ENCODE measurements at regions of chr2 and their contacts with region 1.

Region 1: GRCh38 chr2:179422037-179422643 is 157.5 kb upstream of the SESTD1 start:
- DNase-seq: peak; percentile 68
- H3K4me3 ChIP-seq: no peak overlapping the region
- H3K27ac ChIP-seq: no peak overlapping the region
- H3K4me1 ChIP-seq: no peaks in the 10 kb centered on the region
- H3K27me3 ChIP-seq: peaks cover 2 to 5% of the 10 kb centered on the region in 2 experiments
- CTCF ChIP-seq: peak; percentile 74 to 79
- POLR2A ChIP-seq: no peak

Region 2: DNA sequence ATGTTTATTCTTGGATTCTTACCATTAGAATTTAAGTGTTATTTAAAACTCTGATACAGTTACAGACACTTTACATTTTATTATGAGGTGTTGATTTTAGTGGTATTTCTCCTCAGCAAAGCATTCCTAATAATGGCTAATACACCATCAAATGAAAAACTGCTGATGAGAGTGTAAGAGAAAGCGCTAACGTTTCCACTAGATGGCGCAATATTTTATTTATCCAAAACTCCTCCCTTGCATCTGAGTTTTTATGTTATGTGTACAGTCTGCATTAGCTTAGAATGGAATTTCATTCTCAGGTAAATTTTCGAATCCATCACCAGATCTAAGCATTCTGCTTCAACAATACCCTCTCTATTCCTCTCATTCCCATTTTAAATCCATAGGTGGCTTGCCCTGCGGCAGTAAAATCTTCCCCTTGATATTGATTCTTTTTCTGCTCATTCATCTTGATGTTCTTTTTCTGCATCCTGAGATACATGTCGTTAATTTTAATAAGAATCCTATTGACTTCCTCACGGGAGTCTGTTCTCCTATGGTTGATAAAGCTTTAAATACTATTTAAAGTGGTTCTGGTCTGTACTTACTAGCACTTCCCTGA is 1025.0 kb before region 1 on chr2:
- CTCF ChIA-PET with region 1: no interaction called
- POLR2A ChIA-PET with region 1: no interaction called
- dilution Hi-C with region 1: no loop called
- intact Hi-C with region 1: no loop called
- DNase-seq: peak; percentile 59
- H3K4me3 ChIP-seq: no peak overlapping the region
- H3K27ac ChIP-seq: no peak overlapping the region
- H3K4me1 ChIP-seq: no peaks in the 10 kb centered on the region
- H3K27me3 ChIP-seq: no peaks in the 10 kb centered on the region
- CTCF ChIP-seq: peak; percentile 43 to 51
- POLR2A ChIP-seq: no peak

Region 3: GRCh38 chr2:179440642-179441251 is 18.6 kb after region 1 on chr2:
- CTCF ChIA-PET with region 1: interaction called, 6 read pairs
- POLR2A ChIA-PET with region 1: no interaction called
- dilution Hi-C with region 1: no loop called
- intact Hi-C with region 1: loop called (anchors 2 kb)
- DNase-seq: no peak
- H3K4me3 ChIP-seq: no peak overlapping the region
- H3K27ac ChIP-seq: no peak overlapping the region
- H3K4me1 ChIP-seq: no peaks in the 10 kb centered on the region
- H3K27me3 ChIP-seq: peaks cover 0 to 2% of the 10 kb centered on the region in 2 experiments
- CTCF ChIP-seq: peak; percentile 51 to 57
- POLR2A ChIP-seq: no peak

Region 4: GRCh38 chr2:179461367-179461886 is 39.3 kb after region 1 on chr2:
- CTCF ChIA-PET with region 1: no interaction called
- POLR2A ChIA-PET with region 1: no interaction called
- dilution Hi-C with region 1: no loop called
- intact Hi-C with region 1: no loop called
- DNase-seq: no peak
- H3K4me3 ChIP-seq: no peak overlapping the region
- H3K27ac ChIP-seq: no peak overlapping the region
- H3K4me1 ChIP-seq: peaks cover 4% of the 10 kb centered on the region
- H3K27me3 ChIP-seq: no peaks in the 10 kb centered on the region
- CTCF ChIP-seq: no peak
- POLR2A ChIP-seq: no peak

Region 5: DNA sequence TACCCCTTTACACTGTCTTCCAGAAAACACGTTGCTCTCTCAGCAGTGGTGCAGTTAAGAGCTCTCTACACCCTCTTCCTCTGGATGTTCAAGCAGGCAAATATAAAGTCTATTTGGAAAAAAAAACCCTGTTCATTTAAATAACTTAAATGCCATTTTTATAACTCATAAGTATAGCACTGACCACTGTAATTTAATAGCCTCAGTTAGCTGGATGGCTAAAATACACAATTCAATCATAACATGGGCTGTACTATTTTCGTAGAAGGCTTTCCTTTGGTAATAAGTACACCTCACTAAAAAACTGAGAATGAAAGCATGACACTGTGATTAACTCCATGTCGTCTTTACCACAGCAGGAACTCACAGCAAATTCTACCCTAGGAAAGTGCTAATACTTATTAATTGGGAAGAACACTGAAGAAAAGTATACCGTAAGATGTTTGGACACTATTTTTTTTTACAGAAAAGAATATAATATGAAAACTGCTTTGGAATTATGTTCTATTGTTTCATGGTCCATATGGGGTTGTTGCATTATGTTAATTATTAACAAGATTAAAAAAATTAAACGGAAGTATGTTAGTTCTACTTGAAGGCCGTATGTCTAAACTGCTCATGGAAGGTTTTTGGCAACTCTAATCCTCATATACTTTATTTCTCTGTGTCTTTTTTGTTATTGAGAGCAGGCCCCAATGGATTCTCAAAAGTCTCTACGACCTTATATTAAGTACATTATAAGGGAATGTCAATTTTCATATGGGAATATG is 170.2 kb after region 1 on chr2:
- CTCF ChIA-PET with region 1: no interaction called
- POLR2A ChIA-PET with region 1: no interaction called
- dilution Hi-C with region 1: no loop called
- intact Hi-C with region 1: loop called (anchors 5 kb)
- DNase-seq: no peak
- H3K4me3 ChIP-seq: no peak overlapping the region
- H3K27ac ChIP-seq: no peak overlapping the region
- H3K4me1 ChIP-seq: no peaks in the 10 kb centered on the region
- H3K27me3 ChIP-seq: no peaks in the 10 kb centered on the region
- CTCF ChIP-seq: no peak
- POLR2A ChIP-seq: no peak

Region 6: DNA sequence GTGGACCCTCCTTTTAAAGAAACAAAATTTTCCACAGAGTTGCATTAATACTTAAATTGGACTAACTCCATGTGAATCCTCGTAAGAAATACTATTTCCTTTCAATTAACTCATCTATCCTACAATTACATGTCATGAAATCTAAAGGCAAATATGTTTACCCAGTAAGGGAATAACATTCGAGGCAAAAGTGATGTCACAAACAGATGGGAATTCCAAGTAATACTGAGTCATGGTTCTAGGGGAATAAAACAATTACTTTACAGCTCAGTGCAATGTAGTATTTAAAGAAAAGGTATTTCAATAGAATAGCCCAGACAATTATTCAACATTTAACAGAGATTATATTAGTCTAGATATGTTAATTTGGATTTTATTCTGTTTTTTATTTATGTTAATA is 233.5 kb after region 1 on chr2:
- CTCF ChIA-PET with region 1: no interaction called
- POLR2A ChIA-PET with region 1: no interaction called
- dilution Hi-C with region 1: no loop called
- intact Hi-C with region 1: no loop called
- DNase-seq: no peak
- H3K4me3 ChIP-seq: no peak overlapping the region
- H3K27ac ChIP-seq: no peak overlapping the region
- H3K4me1 ChIP-seq: no peaks in the 10 kb centered on the region
- H3K27me3 ChIP-seq: no peaks in the 10 kb centered on the region
- CTCF ChIP-seq: no peak
- POLR2A ChIP-seq: no peak

Region 7: GRCh38 chr2:179751163-179751809 is 329.1 kb after region 1 on chr2:
- CTCF ChIA-PET with region 1: interaction called, 34 read pairs
- POLR2A ChIA-PET with region 1: no interaction called
- dilution Hi-C with region 1: no loop called
- intact Hi-C with region 1: loop called (anchors 1 kb)
- DNase-seq: peak; percentile 42
- H3K4me3 ChIP-seq: no peak overlapping the region
- H3K27ac ChIP-seq: no peak overlapping the region
- H3K4me1 ChIP-seq: no peaks in the 10 kb centered on the region
- H3K27me3 ChIP-seq: no peaks in the 10 kb centered on the region
- CTCF ChIP-seq: peak; percentile 34 to 36
- POLR2A ChIP-seq: no peak

Region 8: GRCh38 chr2:179952658-179953057 is 530.5 kb after region 1 on chr2:
- CTCF ChIA-PET with region 1: no interaction called
- POLR2A ChIA-PET with region 1: no interaction called
- dilution Hi-C with region 1: no loop called
- intact Hi-C with region 1: no loop called
- DNase-seq: no peak
- H3K4me3 ChIP-seq: no peak overlapping the region
- H3K27ac ChIP-seq: no peak overlapping the region
- H3K4me1 ChIP-seq: no peaks in the 10 kb centered on the region
- H3K27me3 ChIP-seq: no peaks in the 10 kb centered on the region
- CTCF ChIP-seq: no peak
- POLR2A ChIP-seq: no peak

Region 9: DNA sequence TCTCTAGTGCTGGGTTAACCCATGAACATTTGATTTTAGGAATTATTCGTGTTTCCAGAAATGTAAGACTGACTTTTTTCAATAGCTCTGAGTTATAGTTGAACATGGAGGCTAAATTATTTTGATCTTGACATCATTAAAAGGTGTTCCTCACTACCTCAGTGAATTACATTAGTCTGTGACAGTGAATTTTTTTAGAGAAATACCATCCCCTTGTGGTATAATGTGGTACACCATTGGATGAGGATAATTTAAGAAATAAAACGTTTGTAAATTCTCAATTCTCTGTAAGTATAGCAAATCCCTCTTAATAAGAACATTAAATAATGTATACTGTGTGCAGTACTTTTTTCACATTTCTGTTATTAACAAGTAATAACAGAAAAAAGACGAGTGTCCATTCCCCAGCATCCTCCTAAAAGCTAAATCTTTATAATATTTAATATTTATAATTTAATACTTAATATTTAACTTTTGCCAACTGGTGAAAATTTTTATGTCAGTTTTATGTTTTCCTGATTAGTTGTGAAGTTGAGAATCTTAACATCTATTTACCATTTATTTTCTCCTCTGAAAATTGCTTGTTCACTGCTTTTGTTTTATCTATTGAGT is 655.3 kb after region 1 on chr2:
- CTCF ChIA-PET with region 1: no interaction called
- POLR2A ChIA-PET with region 1: no interaction called
- dilution Hi-C with region 1: no loop called
- intact Hi-C with region 1: loop called (anchors 5 kb)
- DNase-seq: peak; percentile 32
- H3K4me3 ChIP-seq: no peak overlapping the region
- H3K27ac ChIP-seq: no peak overlapping the region
- H3K4me1 ChIP-seq: no peaks in the 10 kb centered on the region
- H3K27me3 ChIP-seq: no peaks in the 10 kb centered on the region
- CTCF ChIP-seq: peak; percentile 30 to 34
- POLR2A ChIP-seq: no peak

Measured in endothelial cell of umbilical vein (primary cell).